Gastrocnemius medialis (tissue), 4 donors: ENCODE measurements at regions of chr19 and their contacts with region 1.

Region 1: GRCh38 chr19:1241417-1242095 is at the start of gene ATP5F1D:
- DNase-seq: peak; percentile 93 to 94
- ATAC-seq: peak; percentile 37 to 48
- H3K4me3 ChIP-seq: peak within 1 kb of the TSS; percentile 75 to 97 (median 81)
- H3K27ac ChIP-seq: peak within 1 kb of the TSS; percentile 93 to 100 (median 97)
- H3K4me1 ChIP-seq: peaks cover 52 to 67% of the 10 kb centered on the region in 2 donors
- H3K27me3 ChIP-seq: peaks cover 0 to 5% (median 0%) of the 10 kb centered on the region in 3 donors
- CTCF ChIP-seq: no peak
- POLR2A ChIP-seq: peak; percentile 97 to 98
- total RNA-seq, gene ATP5F1D: 189 to 442 (median 273) TPM

Region 2: GRCh38 chr19:1094975-1095701 is 146.4 kb before region 1 on chr19 and contains the start of gene POLR2E:
- in situ Hi-C with region 1: no loop called
- intact Hi-C with region 1: loop called (anchors 2 kb)
- DNase-seq: peak; percentile 99
- ATAC-seq: peak; percentile 95 to 98
- H3K4me3 ChIP-seq: peak within 1 kb of the TSS; percentile 79 to 99 (median 98)
- H3K27ac ChIP-seq: peak within 1 kb of the TSS; percentile 79 to 94 (median 92)
- H3K4me1 ChIP-seq: peaks cover 26 to 30% of the 10 kb centered on the region in 2 donors
- H3K27me3 ChIP-seq: no peaks in the 10 kb centered on the region
- CTCF ChIP-seq: no peak
- POLR2A ChIP-seq: peak; percentile 88 to 92
- total RNA-seq, gene POLR2E: 118 to 263 (median 228) TPM

Region 3: DNA sequence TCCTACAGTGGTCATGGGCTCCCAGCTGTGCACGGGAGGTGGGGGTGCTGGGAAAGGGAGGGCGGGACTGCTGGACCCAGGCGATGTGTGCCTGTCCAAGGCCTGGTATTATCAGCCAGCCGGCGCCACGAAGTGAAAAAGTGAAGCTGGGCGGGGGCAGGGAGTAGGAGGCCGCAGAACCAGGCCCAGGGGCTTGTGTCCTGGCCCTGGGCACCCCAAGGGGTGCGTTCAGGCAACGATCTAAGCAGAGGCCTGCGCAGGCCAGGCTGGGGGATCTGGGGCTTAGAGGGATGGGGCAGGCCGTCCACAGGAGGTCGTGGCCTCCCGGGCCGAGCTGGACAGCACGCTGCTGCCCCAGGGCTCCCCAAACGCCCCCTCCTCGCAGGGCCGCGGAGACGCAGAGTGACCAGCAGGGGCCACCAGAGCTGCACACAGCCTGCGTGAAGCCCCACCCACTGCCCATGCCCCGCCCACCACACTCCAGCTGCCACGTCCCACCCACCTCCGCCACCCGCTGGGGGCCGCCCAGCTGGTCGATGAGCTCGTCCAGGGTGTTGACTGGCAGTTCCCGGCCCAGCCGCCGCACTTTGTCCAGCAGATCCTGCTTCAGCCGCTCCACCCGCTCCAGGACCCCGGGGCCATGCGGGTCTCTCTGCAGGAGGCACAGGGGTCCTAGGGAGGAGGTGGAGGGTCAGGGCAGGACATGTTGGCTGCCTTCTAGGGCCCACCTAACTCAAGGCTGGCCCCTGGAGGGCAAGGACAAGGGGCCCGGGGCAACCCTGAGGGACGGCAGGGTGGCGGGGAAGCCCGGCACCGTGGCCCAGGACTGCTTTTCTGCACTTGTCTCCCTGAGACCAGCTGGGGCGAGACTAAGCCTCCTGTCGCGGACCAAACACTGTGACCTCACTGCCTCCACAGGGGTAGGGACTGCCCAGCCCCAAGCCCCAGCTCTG is 128.2 kb before region 1 on chr19:
- in situ Hi-C with region 1: no loop called
- intact Hi-C with region 1: loop called (anchors 1 kb)
- DNase-seq: peak; percentile 92 to 95
- ATAC-seq: peak; percentile 81 to 86
- H3K4me3 ChIP-seq: peak overlapping the region in 2 of 4 donors; percentile 12 to 29
- H3K27ac ChIP-seq: peak overlapping the region; percentile 73 to 81 (median 80)
- H3K4me1 ChIP-seq: peaks cover 5 to 12% of the 10 kb centered on the region in 2 donors
- H3K27me3 ChIP-seq: no peaks in the 10 kb centered on the region
- CTCF ChIP-seq: peak; percentile 93 to 99 (median 98)
- POLR2A ChIP-seq: peak in 1 of 2 donors; percentile 44

Region 4: GRCh38 chr19:1173845-1174809 is 67.4 kb before region 1 on chr19 and contains the start of gene SBNO2:
- in situ Hi-C with region 1: no loop called
- intact Hi-C with region 1: loop called (anchors 5 kb)
- DNase-seq: peak; percentile 72 to 80
- ATAC-seq: peak; percentile 74 to 76
- H3K4me3 ChIP-seq: peak within 1 kb of the TSS; percentile 67 to 92 (median 73)
- H3K27ac ChIP-seq: peak within 1 kb of the TSS; percentile 86 to 87 (median 87)
- H3K4me1 ChIP-seq: peaks cover 12 to 21% of the 10 kb centered on the region in 2 donors
- H3K27me3 ChIP-seq: peaks cover 0 to 12% (median 0%) of the 10 kb centered on the region in 3 donors
- CTCF ChIP-seq: no peak
- POLR2A ChIP-seq: peak; percentile 83
- total RNA-seq, gene SBNO2: 22.2 to 49.8 (median 30.9) TPM

Region 5: DNA sequence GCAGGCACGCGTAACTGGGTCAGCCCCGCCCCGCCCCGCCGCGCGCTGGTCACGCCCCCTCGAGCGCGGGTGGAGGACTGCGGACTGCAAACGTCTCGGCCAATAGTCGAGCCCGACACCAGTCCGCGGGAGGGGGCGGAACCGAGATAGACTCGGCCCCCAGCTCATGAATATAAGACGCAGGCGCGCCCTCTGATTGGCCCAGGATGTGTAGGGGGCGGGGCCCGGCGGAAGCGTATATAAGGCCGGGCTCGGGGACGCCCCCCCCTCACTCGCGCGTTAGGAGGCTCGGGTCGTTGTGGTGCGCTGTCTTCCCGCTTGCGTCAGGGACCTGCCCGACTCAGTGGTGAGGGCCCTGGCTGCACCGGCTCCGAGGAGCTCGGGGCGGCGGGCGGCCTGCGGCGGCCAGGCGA is 27.5 kb after region 1 on chr19 and contains the start of gene CIRBP:
- in situ Hi-C with region 1: no loop called
- intact Hi-C with region 1: loop called (anchors 1 kb)
- DNase-seq: peak; percentile 100
- ATAC-seq: peak; percentile 66 to 76
- H3K4me3 ChIP-seq: peak within 1 kb of the TSS; percentile 51 to 81 (median 72)
- H3K27ac ChIP-seq: peak within 1 kb of the TSS; percentile 92 to 99 (median 98)
- H3K4me1 ChIP-seq: peaks cover 66 to 72% of the 10 kb centered on the region in 2 donors
- H3K27me3 ChIP-seq: no peaks in the 10 kb centered on the region
- CTCF ChIP-seq: peak in 1 of 5 experiments; percentile 40
- POLR2A ChIP-seq: peak; percentile 99 to 100
- total RNA-seq, gene CIRBP: 274 to 578 (median 418) TPM

Region 6: DNA sequence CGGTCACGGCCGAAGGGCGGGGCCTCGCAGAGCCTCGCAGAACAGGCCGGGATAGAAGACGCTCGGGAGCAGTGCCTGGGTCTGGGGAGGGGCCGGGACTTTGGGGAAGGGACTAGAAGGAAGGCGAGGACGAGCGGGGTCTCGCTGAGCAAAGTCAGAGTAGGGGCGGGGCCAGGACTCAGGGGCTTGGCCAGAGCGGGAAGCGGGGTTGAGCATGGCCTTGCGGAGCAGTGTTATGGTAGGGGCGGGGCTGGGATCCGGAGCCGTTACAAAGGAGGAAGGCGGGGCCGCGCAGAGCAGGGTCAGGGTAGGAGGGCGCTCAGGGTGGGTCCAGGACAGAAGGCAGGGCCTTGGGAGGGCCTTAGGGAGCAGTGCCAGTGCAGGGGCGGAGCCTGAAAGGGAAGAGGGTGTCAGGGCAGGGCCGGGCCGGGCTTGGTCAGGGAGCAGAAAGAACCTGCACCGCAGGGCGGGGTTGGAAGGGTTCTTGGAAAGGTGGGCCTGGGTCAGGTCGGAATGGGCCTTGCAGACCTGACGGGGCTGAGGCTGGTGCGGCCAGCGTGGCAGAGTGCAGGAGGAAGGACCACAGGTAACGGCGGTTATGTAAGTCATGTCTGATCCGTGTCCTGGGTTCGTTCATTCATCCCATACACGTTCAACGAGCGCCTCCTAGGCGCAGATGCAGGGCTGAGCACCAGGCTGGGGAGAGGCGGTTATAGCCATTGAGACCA is 571.1 kb after region 1 on chr19:
- in situ Hi-C with region 1: no loop called
- intact Hi-C with region 1: no loop called
- DNase-seq: peak; percentile 72 to 83
- ATAC-seq: peak; percentile 81 to 84
- H3K4me3 ChIP-seq: peak overlapping the region; percentile 47 to 84 (median 66)
- H3K27ac ChIP-seq: peak overlapping the region in 3 of 4 donors; percentile 42 to 67 (median 61)
- H3K4me1 ChIP-seq: peaks cover 14 to 18% of the 10 kb centered on the region in 2 donors
- H3K27me3 ChIP-seq: no peaks in the 10 kb centered on the region
- CTCF ChIP-seq: peak in 3 of 5 experiments; percentile 9 to 32 (median 25)
- POLR2A ChIP-seq: peak in 1 of 2 donors; percentile 6